ENCODE measurements at regions of chr18 and their contacts with region 1.

Region 1: DNA sequence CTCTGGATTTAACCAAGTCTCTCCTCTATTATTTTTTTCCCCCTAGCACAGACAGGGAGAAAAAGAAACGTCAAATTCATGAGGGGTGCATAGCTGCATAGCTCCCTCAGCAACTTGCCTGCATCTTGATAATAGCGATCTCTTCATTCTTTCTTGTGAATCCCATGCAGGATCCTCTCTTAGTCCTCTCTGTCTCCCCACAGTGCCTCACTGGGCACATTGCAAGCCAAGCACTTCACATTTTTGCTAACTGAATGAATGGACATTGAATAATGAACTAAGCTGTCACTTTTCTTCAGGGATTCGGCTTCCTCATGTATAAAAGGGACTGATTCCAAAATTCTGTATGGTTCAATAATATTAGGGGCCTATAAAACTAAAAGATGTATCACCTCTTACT is 2.9 kb upstream of the EPB41L3 start:
- DNase-seq: peak; percentile 30
- ATAC-seq: peak; percentile 60
- H3K4me3 ChIP-seq: no peak overlapping the region
- H3K27ac ChIP-seq: no peak overlapping the region
- H3K4me1 ChIP-seq: no peaks in the 10 kb centered on the region
- H3K27me3 ChIP-seq: peaks cover 26% of the 10 kb centered on the region
- CTCF ChIP-seq: peak; percentile 49

Region 2: DNA sequence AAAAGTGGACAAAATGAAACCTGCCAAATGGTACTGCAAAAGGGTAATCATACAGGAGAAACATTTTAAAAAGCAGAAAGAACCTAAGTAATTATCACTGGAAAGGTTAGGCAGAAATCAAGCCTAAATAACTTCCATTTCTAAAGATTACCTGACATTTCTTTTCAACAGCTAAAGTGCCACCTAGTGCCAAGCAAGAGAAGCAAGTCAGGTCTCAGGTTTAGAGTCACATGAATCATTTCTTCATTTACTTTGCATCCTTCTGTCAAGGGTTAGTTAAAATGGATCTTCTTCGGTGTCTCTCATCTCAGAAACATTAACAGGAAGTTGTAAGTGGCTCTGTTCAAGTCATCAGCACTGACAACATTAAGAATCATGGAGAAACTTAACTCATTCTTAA is 439.9 kb before region 1 on chr18:
- CTCF ChIA-PET with region 1: no interaction called
- POLR2A ChIA-PET with region 1: no interaction called
- intact Hi-C with region 1: loop called (anchors 10 kb)
- DNase-seq: peak; percentile 4
- ATAC-seq: peak; percentile 38; the same call in 1 of the 2 replicates
- H3K4me3 ChIP-seq: no peak overlapping the region
- H3K27ac ChIP-seq: no peak overlapping the region
- H3K4me1 ChIP-seq: no peaks in the 10 kb centered on the region
- H3K27me3 ChIP-seq: no peaks in the 10 kb centered on the region
- CTCF ChIP-seq: peak; percentile 55

Region 3: GRCh38 chr18:5237723-5238370 is 308.8 kb before region 1 on chr18:
- CTCF ChIA-PET with region 1: no interaction called
- POLR2A ChIA-PET with region 1: no interaction called
- intact Hi-C with region 1: loop called (anchors 5 kb)
- DNase-seq: peak; percentile 80
- ATAC-seq: peak; percentile 86
- H3K4me3 ChIP-seq: peak overlapping the region; percentile 84
- H3K27ac ChIP-seq: peak overlapping the region; percentile 92
- H3K4me1 ChIP-seq: peaks cover 30% of the 10 kb centered on the region
- H3K27me3 ChIP-seq: no peaks in the 10 kb centered on the region
- CTCF ChIP-seq: no peak

Region 4: DNA sequence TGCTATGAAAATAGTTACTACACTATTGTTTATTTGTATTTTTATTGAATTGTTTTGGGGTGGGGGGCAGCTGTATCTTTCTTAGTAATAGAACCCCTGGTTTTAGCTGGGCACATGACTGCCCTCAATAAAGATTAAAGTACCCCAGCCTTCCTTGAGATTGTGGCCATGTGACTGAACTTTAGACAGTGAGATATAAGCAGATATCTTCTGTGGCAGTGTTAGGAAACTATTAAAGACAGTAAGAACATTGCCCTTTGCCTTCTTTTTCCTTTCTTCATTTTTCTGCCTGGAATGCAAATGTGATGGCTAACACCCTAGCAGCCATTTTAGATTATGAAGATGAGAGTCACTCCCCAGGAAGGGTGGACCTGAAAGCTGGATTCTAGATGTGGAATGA is 301.7 kb before region 1 on chr18:
- CTCF ChIA-PET with region 1: no interaction called
- POLR2A ChIA-PET with region 1: no interaction called
- intact Hi-C with region 1: loop called (anchors 5 kb)
- DNase-seq: no peak
- ATAC-seq: no peak
- H3K4me3 ChIP-seq: no peak overlapping the region
- H3K27ac ChIP-seq: no peak overlapping the region
- H3K4me1 ChIP-seq: peaks cover 3% of the 10 kb centered on the region; the same call in 1 of the 2 replicates
- H3K27me3 ChIP-seq: no peaks in the 10 kb centered on the region
- CTCF ChIP-seq: no peak

Region 5: GRCh38 chr18:5295981-5296705 is 250.5 kb before region 1 on chr18:
- CTCF ChIA-PET with region 1: no interaction called
- POLR2A ChIA-PET with region 1: no interaction called
- intact Hi-C with region 1: loop called (anchors 5 kb)
- DNase-seq: peak; percentile 94
- ATAC-seq: peak; percentile 58
- H3K4me3 ChIP-seq: peak overlapping the region; percentile 75
- H3K27ac ChIP-seq: peak overlapping the region; percentile 58
- H3K4me1 ChIP-seq: peaks cover 6% of the 10 kb centered on the region; the same call in 1 of the 2 replicates
- H3K27me3 ChIP-seq: peaks cover 14% of the 10 kb centered on the region; the same call in 1 of the 2 replicates
- CTCF ChIP-seq: no peak

Region 6: DNA sequence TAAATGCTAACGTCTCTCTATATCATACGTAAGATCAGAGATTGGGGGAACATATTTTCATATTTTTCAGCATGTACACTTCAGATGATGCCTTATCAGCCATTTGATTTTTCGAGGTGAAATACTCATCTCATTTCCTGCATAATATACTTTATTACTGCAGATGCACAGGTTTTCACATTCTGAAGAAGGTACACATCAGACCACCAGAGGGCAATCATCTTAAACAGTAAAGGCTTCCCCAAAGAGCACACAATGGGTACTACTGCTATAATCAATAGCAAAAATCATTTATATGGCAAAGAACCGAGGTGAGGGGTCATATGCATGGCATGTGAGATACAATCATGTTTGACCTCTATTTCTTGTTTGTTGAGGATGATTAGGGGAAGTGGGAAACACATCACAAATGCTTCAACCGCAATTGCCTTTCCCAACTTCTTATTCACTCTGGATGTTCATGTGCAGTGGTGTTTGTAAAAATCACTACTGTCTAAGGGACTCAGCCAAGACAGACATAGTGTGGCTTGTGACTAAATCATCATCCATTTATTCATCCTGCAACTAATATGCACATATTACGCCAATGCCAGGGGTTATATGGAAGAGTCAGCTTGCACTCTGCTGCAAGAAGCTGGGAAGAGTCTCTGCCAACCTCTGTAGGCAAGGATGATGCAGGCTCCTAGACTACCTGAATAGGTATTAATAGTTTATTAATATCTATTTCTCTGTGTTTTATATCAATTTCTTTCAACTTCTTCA is 121.6 kb before region 1 on chr18:
- CTCF ChIA-PET with region 1: no interaction called
- POLR2A ChIA-PET with region 1: no interaction called
- intact Hi-C with region 1: loop called (anchors 1 kb)
- DNase-seq: peak; percentile 51
- ATAC-seq: peak; percentile 71
- H3K4me3 ChIP-seq: no peak overlapping the region
- H3K27ac ChIP-seq: peak overlapping the region; percentile 70
- H3K4me1 ChIP-seq: no peaks in the 10 kb centered on the region
- H3K27me3 ChIP-seq: 0 out of 2 replicates have a peak, but pooled peaks cover 5% of the 10 kb centered on the region
- CTCF ChIP-seq: peak; percentile 64

Region 7: DNA sequence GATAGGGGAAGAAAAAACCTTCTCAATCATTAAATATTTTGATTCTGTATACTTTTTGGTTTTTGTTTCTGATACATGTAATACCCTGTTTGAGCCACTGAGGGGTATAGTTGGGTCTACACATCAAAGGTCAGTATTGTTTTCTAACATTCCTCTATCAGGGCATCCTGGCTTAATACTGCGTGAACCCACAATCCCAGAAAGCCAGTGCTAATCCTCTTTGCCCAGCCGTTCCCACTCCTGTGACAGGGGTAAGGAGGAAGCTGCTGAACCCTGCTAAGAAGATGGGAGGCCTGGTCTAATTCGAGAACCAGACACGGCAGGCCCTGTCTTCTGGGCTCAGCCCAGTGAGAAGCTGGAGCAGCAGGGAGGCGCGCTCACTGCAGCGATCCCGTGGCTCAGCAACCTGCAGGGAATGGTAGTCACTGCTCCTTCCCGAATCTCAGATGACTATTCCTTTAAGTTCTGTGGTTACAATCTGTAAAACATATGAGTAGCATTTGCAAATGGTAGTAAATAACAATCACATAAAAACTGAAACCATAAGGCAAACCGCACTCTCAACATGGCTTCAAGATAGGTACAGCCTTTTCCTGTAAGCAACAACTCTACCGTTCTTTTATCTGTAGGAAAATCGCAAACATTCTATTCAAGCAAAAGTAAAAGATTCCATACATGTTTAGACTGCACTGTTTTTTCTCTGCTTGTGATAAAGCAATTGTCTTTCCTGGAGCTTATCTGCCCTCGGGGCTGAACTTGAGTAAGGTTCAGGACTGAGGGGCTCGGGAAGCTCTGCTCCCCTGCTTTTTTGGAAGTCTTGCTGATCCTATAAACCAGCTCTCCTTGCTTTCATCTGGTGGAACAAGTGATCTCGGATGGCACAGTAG is 89.8 kb before region 1 on chr18:
- CTCF ChIA-PET with region 1: interaction called, 4 read pairs
- POLR2A ChIA-PET with region 1: no interaction called
- intact Hi-C with region 1: loop called (anchors 1 kb)
- DNase-seq: no peak
- ATAC-seq: peak; percentile 40
- H3K4me3 ChIP-seq: no peak overlapping the region
- H3K27ac ChIP-seq: peak overlapping the region; percentile 80
- H3K4me1 ChIP-seq: no peaks in the 10 kb centered on the region
- H3K27me3 ChIP-seq: no peaks in the 10 kb centered on the region
- CTCF ChIP-seq: peak; percentile 26; the same call in 1 of the 2 replicates

Region 8: DNA sequence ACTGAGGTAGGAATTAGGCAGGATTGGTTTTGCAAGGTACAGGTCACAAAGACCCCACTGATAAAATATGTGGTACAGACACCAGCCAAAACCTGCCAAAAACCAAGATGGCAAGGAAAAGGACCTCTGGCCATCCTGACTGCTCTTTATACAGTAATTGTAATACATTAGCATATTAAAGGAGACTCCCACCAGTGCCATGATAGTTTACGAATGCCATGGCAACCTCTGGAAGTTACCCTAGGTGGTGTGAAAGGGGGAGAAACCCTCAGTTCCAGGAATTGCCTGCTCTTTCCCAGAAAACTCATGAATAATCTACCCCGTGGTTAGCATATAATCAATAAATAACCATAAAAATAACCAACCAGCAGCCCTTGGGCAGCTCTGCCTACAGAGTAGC is 126.9 kb after region 1 on chr18:
- CTCF ChIA-PET with region 1: no interaction called
- POLR2A ChIA-PET with region 1: no interaction called
- intact Hi-C with region 1: no loop called
- DNase-seq: no peak
- ATAC-seq: no peak
- H3K4me3 ChIP-seq: no peak overlapping the region
- H3K27ac ChIP-seq: no peak overlapping the region
- H3K4me1 ChIP-seq: no peaks in the 10 kb centered on the region
- H3K27me3 ChIP-seq: no peaks in the 10 kb centered on the region; the same call in 1 of the 2 replicates
- CTCF ChIP-seq: no peak